ENCODE measurements at regions of chr4 and their contacts with region 1.

Region 1: GRCh38 chr4:80365928-80366327 is 30.4 kb downstream of the CFAP299 start:
- DNase-seq: peak; percentile 27 to 78 (median 56)
- ATAC-seq: peak; percentile 81
- H3K4me3 ChIP-seq: no peak overlapping the region
- H3K4me3 Mint-ChIP-seq: no peak overlapping the region
- H3K27ac ChIP-seq: no peak overlapping the region
- H3K27ac Mint-ChIP-seq: no peak overlapping the region
- H3K4me1 ChIP-seq: no peaks in the 10 kb centered on the region
- H3K4me1 Mint-ChIP-seq: peaks cover 7% of the 10 kb centered on the region
- H3K27me3 ChIP-seq: no peaks in the 10 kb centered on the region
- H3K27me3 Mint-ChIP-seq: peaks cover 1% of the 10 kb centered on the region
- CTCF ChIP-seq: peak; percentile 75

Region 2: DNA sequence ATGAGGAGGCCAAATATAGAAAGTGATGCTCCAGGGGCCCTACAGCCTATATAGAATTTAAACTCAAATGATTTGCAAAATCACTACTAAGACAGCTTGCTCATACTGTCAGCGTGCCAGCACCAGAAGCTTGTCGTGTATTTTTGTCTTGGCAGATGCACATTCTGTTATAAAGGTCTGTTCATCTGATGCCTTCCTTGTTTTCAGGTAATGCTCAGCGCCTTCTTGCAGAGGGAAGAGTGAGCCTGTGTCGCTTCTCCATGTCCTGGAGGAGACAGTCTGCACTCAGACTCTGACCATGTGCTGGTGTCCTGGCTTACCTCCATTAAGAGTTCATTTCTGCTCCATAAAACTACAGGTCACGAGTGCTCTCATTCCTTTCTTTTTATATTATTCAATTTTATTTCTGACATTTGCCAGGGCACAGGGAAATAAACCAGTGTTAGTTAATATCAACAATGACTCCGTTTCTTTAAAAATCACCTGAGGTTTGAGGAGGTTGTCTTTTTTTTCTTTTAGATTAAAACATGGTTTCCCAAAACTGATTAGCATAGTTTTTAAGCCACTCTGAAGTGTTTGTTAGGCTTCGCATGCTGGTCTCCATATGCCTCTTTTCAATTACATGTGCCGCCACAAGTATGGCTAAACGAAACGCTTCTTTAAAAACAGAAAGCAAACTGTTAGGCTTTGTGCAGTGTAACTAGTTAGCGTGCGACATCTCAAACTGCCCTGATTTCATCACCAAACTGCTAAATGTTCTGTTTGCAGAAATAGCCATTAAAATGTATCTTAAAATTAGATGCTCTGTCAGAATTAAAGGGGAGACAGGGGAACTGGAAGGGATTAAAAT is 742.7 kb before region 1 on chr4:
- CTCF ChIA-PET with region 1: no interaction called
- POLR2A ChIA-PET with region 1: no interaction called
- intact Hi-C with region 1: no loop called
- DNase-seq: no peak
- ATAC-seq: no peak
- H3K4me3 ChIP-seq: no peak overlapping the region
- H3K4me3 Mint-ChIP-seq: no peak overlapping the region
- H3K27ac ChIP-seq: no peak overlapping the region
- H3K27ac Mint-ChIP-seq: no peak overlapping the region
- H3K4me1 ChIP-seq: no peaks in the 10 kb centered on the region
- H3K4me1 Mint-ChIP-seq: peaks cover 7% of the 10 kb centered on the region
- H3K27me3 ChIP-seq: no peaks in the 10 kb centered on the region
- H3K27me3 Mint-ChIP-seq: no peaks in the 10 kb centered on the region
- CTCF ChIP-seq: no peak

Region 3: GRCh38 chr4:80462621-80463091 is 96.7 kb after region 1 on chr4:
- CTCF ChIA-PET with region 1: interaction called, 7 read pairs
- POLR2A ChIA-PET with region 1: no interaction called
- intact Hi-C with region 1: loop called in 1 of 2 experiments (anchors 2 kb)
- DNase-seq: peak in 2 of 9 experiments; percentile 21 to 36
- ATAC-seq: no peak
- H3K4me3 ChIP-seq: peak overlapping the region; percentile 29
- H3K4me3 Mint-ChIP-seq: peak overlapping the region; percentile 79
- H3K27ac ChIP-seq: peak overlapping the region; percentile 19 to 34
- H3K27ac Mint-ChIP-seq: peak overlapping the region; percentile 78
- H3K4me1 ChIP-seq: peaks cover 22% of the 10 kb centered on the region
- H3K4me1 Mint-ChIP-seq: peaks cover 35% of the 10 kb centered on the region
- H3K27me3 ChIP-seq: no peaks in the 10 kb centered on the region
- H3K27me3 Mint-ChIP-seq: no peaks in the 10 kb centered on the region
- CTCF ChIP-seq: no peak

Region 4: DNA sequence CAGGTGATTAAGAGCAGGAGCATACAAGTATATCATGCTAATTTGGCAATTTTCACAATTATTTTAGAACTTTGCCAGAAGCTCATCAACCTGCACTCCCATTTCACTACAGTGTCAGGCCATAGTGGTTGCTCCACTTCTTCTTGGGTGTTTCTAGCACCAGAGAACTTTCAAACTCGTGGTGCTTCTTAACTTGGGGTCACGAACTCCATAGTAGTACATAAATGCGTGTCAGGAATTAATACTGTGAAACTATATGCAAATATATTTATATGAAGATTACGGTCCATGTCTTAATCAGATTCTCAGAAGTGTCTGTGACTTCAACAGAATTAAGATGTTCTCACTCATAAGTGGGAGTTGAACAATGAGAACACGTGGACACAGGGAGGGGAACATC is 410.2 kb after region 1 on chr4:
- CTCF ChIA-PET with region 1: no interaction called
- POLR2A ChIA-PET with region 1: no interaction called
- intact Hi-C with region 1: loop called (anchors 10 kb)
- DNase-seq: no peak
- ATAC-seq: no peak
- H3K4me3 ChIP-seq: no peak overlapping the region
- H3K4me3 Mint-ChIP-seq: no peak overlapping the region
- H3K27ac ChIP-seq: no peak overlapping the region
- H3K27ac Mint-ChIP-seq: no peak overlapping the region
- H3K4me1 ChIP-seq: no peaks in the 10 kb centered on the region
- H3K4me1 Mint-ChIP-seq: no peaks in the 10 kb centered on the region
- H3K27me3 ChIP-seq: no peaks in the 10 kb centered on the region
- H3K27me3 Mint-ChIP-seq: no peaks in the 10 kb centered on the region
- CTCF ChIP-seq: no peak

Region 5: GRCh38 chr4:80911458-80911857 is 545.5 kb after region 1 on chr4:
- CTCF ChIA-PET with region 1: no interaction called
- POLR2A ChIA-PET with region 1: no interaction called
- intact Hi-C with region 1: no loop called
- DNase-seq: no peak
- ATAC-seq: no peak
- H3K4me3 ChIP-seq: no peak overlapping the region
- H3K4me3 Mint-ChIP-seq: no peak overlapping the region
- H3K27ac ChIP-seq: no peak overlapping the region
- H3K27ac Mint-ChIP-seq: no peak overlapping the region
- H3K4me1 ChIP-seq: no peaks in the 10 kb centered on the region
- H3K4me1 Mint-ChIP-seq: no peaks in the 10 kb centered on the region
- H3K27me3 ChIP-seq: no peaks in the 10 kb centered on the region
- H3K27me3 Mint-ChIP-seq: no peaks in the 10 kb centered on the region
- CTCF ChIP-seq: no peak

Region 6: GRCh38 chr4:80989921-80990544 is 624.1 kb after region 1 on chr4:
- CTCF ChIA-PET with region 1: interaction called, 55 read pairs
- POLR2A ChIA-PET with region 1: no interaction called
- intact Hi-C with region 1: loop called (anchors 1 kb)
- DNase-seq: peak in 4 of 9 experiments; percentile 12 to 68 (median 38)
- ATAC-seq: peak; percentile 42
- H3K4me3 ChIP-seq: no peak overlapping the region
- H3K4me3 Mint-ChIP-seq: no peak overlapping the region
- H3K27ac ChIP-seq: no peak overlapping the region
- H3K27ac Mint-ChIP-seq: no peak overlapping the region
- H3K4me1 ChIP-seq: no peaks in the 10 kb centered on the region
- H3K4me1 Mint-ChIP-seq: peaks cover 4% of the 10 kb centered on the region
- H3K27me3 ChIP-seq: no peaks in the 10 kb centered on the region
- H3K27me3 Mint-ChIP-seq: peaks cover 4% of the 10 kb centered on the region
- CTCF ChIP-seq: peak; percentile 83

Region 7: DNA sequence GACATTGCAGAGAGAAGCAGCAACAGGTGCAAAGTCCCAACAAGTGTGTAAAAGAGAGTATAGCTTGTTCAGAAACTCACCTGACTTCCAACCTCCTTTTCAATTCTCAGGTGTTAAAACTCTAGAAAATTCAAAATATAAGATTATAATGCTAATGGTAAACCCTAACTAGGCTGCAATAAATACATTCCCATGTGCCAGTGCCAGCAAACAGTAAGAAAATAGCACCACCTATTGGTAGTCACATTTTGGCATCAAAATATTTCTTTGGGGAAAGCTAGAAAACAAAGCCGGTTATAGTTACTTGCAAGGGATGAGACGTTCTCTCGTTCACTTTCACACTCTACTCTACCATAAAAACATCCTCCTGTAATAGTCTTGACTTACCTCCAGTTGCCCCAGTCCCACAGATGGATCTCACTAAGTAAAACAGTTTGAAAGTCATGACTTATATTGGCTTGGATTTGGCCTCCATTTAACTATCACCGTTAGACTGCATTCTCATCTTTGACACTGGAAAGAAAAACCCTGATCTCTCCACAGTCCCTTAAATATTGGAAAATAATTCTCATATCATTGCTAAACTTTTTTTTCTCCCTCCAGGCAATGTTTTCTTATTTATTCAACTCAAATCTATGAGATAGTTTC is 674.2 kb after region 1 on chr4:
- CTCF ChIA-PET with region 1: interaction called, 31 read pairs
- POLR2A ChIA-PET with region 1: no interaction called
- intact Hi-C with region 1: loop called (anchors 1 kb)
- DNase-seq: peak in 2 of 9 experiments; percentile 49 to 59
- ATAC-seq: no peak
- H3K4me3 ChIP-seq: no peak overlapping the region
- H3K4me3 Mint-ChIP-seq: no peak overlapping the region
- H3K27ac ChIP-seq: no peak overlapping the region
- H3K27ac Mint-ChIP-seq: no peak overlapping the region
- H3K4me1 ChIP-seq: no peaks in the 10 kb centered on the region
- H3K4me1 Mint-ChIP-seq: peaks cover 2% of the 10 kb centered on the region
- H3K27me3 ChIP-seq: no peaks in the 10 kb centered on the region
- H3K27me3 Mint-ChIP-seq: peaks cover 22% of the 10 kb centered on the region
- CTCF ChIP-seq: peak; percentile 71

Region 8: GRCh38 chr4:81351654-81352445 is 985.9 kb after region 1 on chr4:
- CTCF ChIA-PET with region 1: interaction called, 9 read pairs
- POLR2A ChIA-PET with region 1: no interaction called
- intact Hi-C with region 1: loop called in 1 of 2 experiments (anchors 2 kb)
- DNase-seq: peak; percentile 18 to 73 (median 67)
- ATAC-seq: peak; percentile 57
- H3K4me3 ChIP-seq: no peak overlapping the region
- H3K4me3 Mint-ChIP-seq: no peak overlapping the region
- H3K27ac ChIP-seq: no peak overlapping the region
- H3K27ac Mint-ChIP-seq: no peak overlapping the region
- H3K4me1 ChIP-seq: no peaks in the 10 kb centered on the region
- H3K4me1 Mint-ChIP-seq: no peaks in the 10 kb centered on the region
- H3K27me3 ChIP-seq: no peaks in the 10 kb centered on the region
- H3K27me3 Mint-ChIP-seq: peaks cover 8% of the 10 kb centered on the region
- CTCF ChIP-seq: peak; percentile 89

Measured in CD8-positive, alpha-beta T cell (primary cell).